Activated CD4-positive, alpha-beta T cell treated with anti-CD3 and anti-CD28 coated beads, Interleukin-2, amount 10 ng/mL, durations not matched to agents 7 days and 5 days (primary cell): ENCODE measurements at regions of chr5 and their contacts with region 1.

Region 1: GRCh38 chr5:140346348-140347101 is at the start of gene HBEGF:
- DNase-seq: peak; percentile 55
- H3K4me3 Mint-ChIP-seq: peak within 1 kb of the TSS; percentile 85
- H3K27ac Mint-ChIP-seq: peak within 1 kb of the TSS; percentile 75
- H3K4me1 Mint-ChIP-seq: peaks cover 68% of the 10 kb centered on the region
- H3K27me3 Mint-ChIP-seq: peaks cover 4% of the 10 kb centered on the region
- total RNA-seq, gene HBEGF: 13.7 to 15.4 TPM

Region 2: GRCh38 chr5:140251527-140251973 is 95.0 kb before region 1 on chr5:
- CTCF ChIA-PET with region 1: interaction called, 88 read pairs
- POLR2A ChIA-PET with region 1: interaction called, 3 read pairs
- DNase-seq: peak; percentile 80
- H3K4me3 Mint-ChIP-seq: peak overlapping the region; percentile 53
- H3K27ac Mint-ChIP-seq: peak overlapping the region; percentile 85
- H3K4me1 Mint-ChIP-seq: peaks cover 36% of the 10 kb centered on the region
- H3K27me3 Mint-ChIP-seq: no peaks in the 10 kb centered on the region

Region 3: DNA sequence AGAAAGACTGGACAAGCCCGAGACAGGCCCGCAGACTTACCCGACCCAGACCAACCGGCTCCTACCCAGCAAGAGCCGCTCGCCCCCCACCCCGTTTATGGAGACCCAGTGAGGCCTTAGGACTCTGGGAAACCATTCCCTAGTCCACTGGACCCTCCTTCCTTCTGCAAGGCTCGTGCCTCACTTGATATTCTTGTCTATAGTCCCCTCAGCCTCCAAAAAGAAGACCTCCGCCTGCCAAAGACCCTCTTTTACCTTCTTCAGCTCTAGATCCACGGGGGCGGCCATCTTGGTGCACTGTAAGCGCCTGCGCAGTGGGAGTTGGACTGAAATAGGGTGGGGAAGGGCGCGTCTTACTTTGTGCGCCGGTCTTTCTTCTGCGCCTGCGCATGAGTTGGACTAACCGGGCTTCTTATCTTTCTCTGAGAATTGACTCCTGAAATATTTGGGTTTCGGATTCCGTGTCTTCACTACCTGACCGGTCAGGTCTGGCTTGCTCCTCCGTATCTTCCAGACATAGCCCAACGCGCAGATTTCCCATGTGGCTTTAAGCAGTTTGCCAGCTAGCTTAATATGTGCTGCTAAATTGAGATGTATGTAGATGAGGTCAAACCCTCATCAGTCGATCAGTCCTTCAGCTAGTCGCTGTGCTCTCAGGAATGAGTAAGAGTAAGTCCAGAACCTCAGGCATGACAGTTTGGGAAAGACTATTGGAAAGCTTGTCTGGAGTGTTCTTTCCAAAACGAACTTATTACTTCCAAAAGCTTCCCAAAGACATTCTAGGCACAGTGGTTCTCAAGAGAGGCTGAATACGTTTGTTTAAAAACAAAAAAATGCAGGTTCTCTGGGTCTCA is 43.5 kb before region 1 on chr5 and contains the start of gene PFDN1:
- CTCF ChIA-PET with region 1: no interaction called
- POLR2A ChIA-PET with region 1: no interaction called
- DNase-seq: peak; percentile 96
- H3K4me3 Mint-ChIP-seq: peak within 1 kb of the TSS; percentile 97
- H3K27ac Mint-ChIP-seq: peak within 1 kb of the TSS; percentile 96
- H3K4me1 Mint-ChIP-seq: peaks cover 42% of the 10 kb centered on the region
- H3K27me3 Mint-ChIP-seq: peaks cover 5% of the 10 kb centered on the region
- total RNA-seq, gene PFDN1: 60.8 to 70.5 TPM

Region 4: GRCh38 chr5:140336388-140336787 is 10.1 kb before region 1 on chr5:
- CTCF ChIA-PET with region 1: interaction called, 21 read pairs
- POLR2A ChIA-PET with region 1: no interaction called
- DNase-seq: no peak
- H3K4me3 Mint-ChIP-seq: no peak overlapping the region
- H3K27ac Mint-ChIP-seq: peak overlapping the region; percentile 17
- H3K4me1 Mint-ChIP-seq: peaks cover 46% of the 10 kb centered on the region
- H3K27me3 Mint-ChIP-seq: no peaks in the 10 kb centered on the region

Region 5: GRCh38 chr5:140357726-140358093 is 11.2 kb after region 1 on chr5:
- CTCF ChIA-PET with region 1: interaction called, 13 read pairs
- POLR2A ChIA-PET with region 1: no interaction called
- DNase-seq: peak; percentile 80
- H3K4me3 Mint-ChIP-seq: peak overlapping the region; percentile 69
- H3K27ac Mint-ChIP-seq: peak overlapping the region; percentile 80
- H3K4me1 Mint-ChIP-seq: peaks cover 11% of the 10 kb centered on the region
- H3K27me3 Mint-ChIP-seq: peaks cover 7% of the 10 kb centered on the region

Region 6: DNA sequence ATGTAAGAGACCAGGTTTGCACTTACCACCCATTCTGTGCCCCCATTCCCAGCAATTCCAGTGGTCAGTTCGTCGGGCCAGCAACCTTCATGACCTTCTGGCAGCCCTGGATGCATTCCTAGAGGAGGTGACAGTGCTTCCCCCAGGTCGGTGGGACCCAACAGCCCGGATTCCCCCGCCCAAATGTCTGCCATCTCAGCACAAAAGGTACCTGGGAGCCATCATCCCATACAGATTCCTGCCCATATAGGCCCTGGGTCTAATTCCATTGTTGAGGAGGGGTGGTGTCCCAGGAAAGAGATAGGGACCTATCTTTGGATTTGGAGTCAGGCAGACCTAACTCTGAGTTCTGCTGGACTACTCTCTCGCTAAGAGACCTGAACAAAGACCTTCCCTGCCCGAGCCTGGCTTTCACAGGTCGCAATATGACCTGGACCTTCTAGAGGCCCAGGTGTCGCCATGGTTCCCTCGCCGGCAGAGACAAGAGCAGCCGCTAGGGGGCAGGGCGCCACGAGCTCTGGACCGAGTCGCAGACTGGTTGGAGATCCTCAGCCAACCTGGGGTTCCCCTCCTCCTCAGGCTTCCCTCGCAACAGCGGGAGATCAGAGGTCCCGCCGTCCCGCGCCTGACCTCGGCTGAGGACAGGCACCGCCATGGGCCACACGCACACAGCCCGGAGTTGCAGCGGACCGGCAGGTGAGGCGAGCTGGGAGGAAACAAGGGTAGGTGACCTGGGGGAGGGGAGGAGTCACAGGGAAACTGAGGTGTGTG is 16.5 kb after region 1 on chr5:
- CTCF ChIA-PET with region 1: interaction called, 14 read pairs
- POLR2A ChIA-PET with region 1: no interaction called
- DNase-seq: peak; percentile 86
- H3K4me3 Mint-ChIP-seq: peak overlapping the region; percentile 61
- H3K27ac Mint-ChIP-seq: peak overlapping the region; percentile 60
- H3K4me1 Mint-ChIP-seq: peaks cover 5% of the 10 kb centered on the region
- H3K27me3 Mint-ChIP-seq: peaks cover 5% of the 10 kb centered on the region

Region 7: GRCh38 chr5:140408750-140409256 is 62.3 kb after region 1 on chr5:
- CTCF ChIA-PET with region 1: no interaction called
- POLR2A ChIA-PET with region 1: no interaction called
- DNase-seq: no peak
- H3K4me3 Mint-ChIP-seq: no peak overlapping the region
- H3K27ac Mint-ChIP-seq: no peak overlapping the region
- H3K4me1 Mint-ChIP-seq: peaks cover 27% of the 10 kb centered on the region
- H3K27me3 Mint-ChIP-seq: no peaks in the 10 kb centered on the region